Naive thymus-derived CD4-positive, alpha-beta T cell (primary cell): ENCODE measurements at regions of chr11 and their contacts with region 1.

Region 1: GRCh38 chr11:45964911-45965389 is 42.5 kb downstream of the LARGE2 start:
- DNase-seq: peak; percentile 11 to 68 (median 61)
- ATAC-seq: peak; percentile 96
- H3K4me3 ChIP-seq: no peak overlapping the region
- H3K4me3 Mint-ChIP-seq: no peak overlapping the region
- H3K27ac ChIP-seq: no peak overlapping the region
- H3K27ac Mint-ChIP-seq: no peak overlapping the region
- H3K4me1 ChIP-seq: no peaks in the 10 kb centered on the region
- H3K4me1 Mint-ChIP-seq: no peaks in the 10 kb centered on the region
- H3K27me3 ChIP-seq: no peaks in the 10 kb centered on the region
- H3K27me3 Mint-ChIP-seq: no peaks in the 10 kb centered on the region

Region 2: GRCh38 chr11:45982656-45983470 is 17.9 kb after region 1 on chr11:
- CTCF ChIA-PET with region 1: interaction called, 12 read pairs
- POLR2A ChIA-PET with region 1: interaction called, 3 read pairs
- intact Hi-C with region 1: no loop called
- DNase-seq: no peak
- ATAC-seq: no peak
- H3K4me3 ChIP-seq: no peak overlapping the region
- H3K4me3 Mint-ChIP-seq: peak overlapping the region in 1 of 10 donors; percentile 3
- H3K27ac ChIP-seq: no peak overlapping the region
- H3K27ac Mint-ChIP-seq: peak overlapping the region in 3 of 9 donors; percentile 5 to 86 (median 41)
- H3K4me1 ChIP-seq: no peaks in the 10 kb centered on the region
- H3K4me1 Mint-ChIP-seq: peaks cover 15 to 44% (median 25%) of the 10 kb centered on the region in 7 donors
- H3K27me3 ChIP-seq: no peaks in the 10 kb centered on the region
- H3K27me3 Mint-ChIP-seq: no peaks in the 10 kb centered on the region

Region 3: GRCh38 chr11:46064221-46064620 is 99.3 kb after region 1 on chr11:
- CTCF ChIA-PET with region 1: no interaction called
- POLR2A ChIA-PET with region 1: no interaction called
- intact Hi-C with region 1: no loop called
- DNase-seq: no peak
- ATAC-seq: no peak
- H3K4me3 ChIP-seq: no peak overlapping the region
- H3K4me3 Mint-ChIP-seq: no peak overlapping the region
- H3K27ac ChIP-seq: no peak overlapping the region
- H3K27ac Mint-ChIP-seq: no peak overlapping the region
- H3K4me1 ChIP-seq: no peaks in the 10 kb centered on the region
- H3K4me1 Mint-ChIP-seq: peaks cover 0 to 27% (median 11%) of the 10 kb centered on the region in 7 donors
- H3K27me3 ChIP-seq: no peaks in the 10 kb centered on the region
- H3K27me3 Mint-ChIP-seq: no peaks in the 10 kb centered on the region